ENCODE measurements at regions of chr3 and their contacts with region 1.

Region 1: DNA sequence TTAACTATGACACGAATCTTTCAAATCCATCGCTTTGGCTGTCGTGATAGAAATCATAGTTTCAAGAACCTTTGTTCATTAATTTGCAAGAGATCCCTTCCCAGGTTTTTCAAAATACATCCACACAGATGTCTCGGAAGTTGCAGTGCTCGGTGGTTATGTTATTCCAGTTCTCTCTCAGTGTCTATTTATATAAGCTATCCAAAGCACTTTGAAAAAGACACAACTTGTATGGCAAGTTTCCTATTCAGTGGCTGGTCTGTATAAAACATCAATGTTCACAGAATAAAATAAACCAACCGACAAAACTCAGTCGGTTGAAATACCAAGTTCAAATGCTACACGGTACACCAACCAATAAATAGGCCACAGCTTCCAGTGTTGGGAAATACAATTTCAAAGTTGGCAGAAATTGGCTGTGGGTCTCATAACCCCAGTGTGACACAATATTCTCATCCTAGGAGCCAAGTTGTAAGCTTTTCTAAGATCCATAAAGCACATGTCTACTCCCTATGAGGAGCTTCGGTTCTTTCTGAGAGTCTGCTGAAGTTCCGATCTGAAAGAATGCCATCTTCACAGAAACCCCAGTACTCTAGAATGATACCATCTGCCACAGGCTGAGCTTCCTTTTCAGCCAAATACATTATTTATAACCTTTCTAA is 23.7 kb downstream of the SATB1 start:
- DNase-seq: no peak
- H3K4me3 Mint-ChIP-seq: no peak overlapping the region
- H3K27ac Mint-ChIP-seq: peak overlapping the region; percentile 77
- H3K4me1 Mint-ChIP-seq: peaks cover 68% of the 10 kb centered on the region
- H3K27me3 Mint-ChIP-seq: no peaks in the 10 kb centered on the region

Region 2: GRCh38 chr3:18334837-18335601 is 66.4 kb before region 1 on chr3:
- CTCF ChIA-PET with region 1: no interaction called
- POLR2A ChIA-PET with region 1: no interaction called
- DNase-seq: no peak
- H3K4me3 Mint-ChIP-seq: no peak overlapping the region
- H3K27ac Mint-ChIP-seq: no peak overlapping the region
- H3K4me1 Mint-ChIP-seq: peaks cover 9% of the 10 kb centered on the region
- H3K27me3 Mint-ChIP-seq: peaks cover 5% of the 10 kb centered on the region

Region 3: GRCh38 chr3:18382760-18383369 is 18.6 kb before region 1 on chr3:
- CTCF ChIA-PET with region 1: interaction called, 4 read pairs
- POLR2A ChIA-PET with region 1: interaction called, 11 read pairs
- DNase-seq: no peak
- H3K4me3 Mint-ChIP-seq: no peak overlapping the region
- H3K27ac Mint-ChIP-seq: peak overlapping the region; percentile 38
- H3K4me1 Mint-ChIP-seq: peaks cover 42% of the 10 kb centered on the region
- H3K27me3 Mint-ChIP-seq: no peaks in the 10 kb centered on the region

Region 4: DNA sequence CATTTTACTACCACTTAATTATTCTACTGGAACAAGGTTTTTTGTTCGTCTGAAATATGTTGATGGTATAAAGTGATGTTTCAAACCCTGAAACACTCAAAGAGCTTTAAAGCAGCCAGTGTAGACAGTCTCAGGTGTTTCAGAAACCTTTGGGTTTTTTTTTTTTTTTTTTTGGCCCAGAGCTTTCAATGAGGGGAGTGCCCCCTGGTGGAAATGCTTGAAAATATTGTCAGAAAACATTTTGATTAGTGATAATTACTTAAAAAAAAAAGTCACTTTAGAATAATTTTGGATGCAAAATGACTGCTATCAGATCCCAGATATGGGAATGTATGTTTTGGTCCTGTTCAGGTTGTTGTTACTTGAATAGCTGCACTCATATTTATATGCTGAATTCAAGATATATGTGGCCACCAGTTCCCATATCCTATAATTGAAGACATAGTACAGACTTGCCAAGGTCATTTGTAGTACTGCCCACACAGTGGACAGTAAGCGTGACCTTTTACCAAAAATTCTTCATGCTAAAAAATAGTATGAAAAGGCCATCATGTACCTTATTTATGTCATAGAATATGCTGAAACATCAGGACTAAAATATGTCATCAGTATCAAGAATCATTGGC is 12.2 kb before region 1 on chr3:
- CTCF ChIA-PET with region 1: interaction called, 10 read pairs
- POLR2A ChIA-PET with region 1: interaction called, 11 read pairs
- DNase-seq: no peak
- H3K4me3 Mint-ChIP-seq: no peak overlapping the region
- H3K27ac Mint-ChIP-seq: no peak overlapping the region
- H3K4me1 Mint-ChIP-seq: peaks cover 46% of the 10 kb centered on the region
- H3K27me3 Mint-ChIP-seq: no peaks in the 10 kb centered on the region

Region 5: GRCh38 chr3:18419232-18419631 is 17.8 kb after region 1 on chr3:
- CTCF ChIA-PET with region 1: no interaction called
- POLR2A ChIA-PET with region 1: interaction called, 12 read pairs
- DNase-seq: no peak
- H3K4me3 Mint-ChIP-seq: peak overlapping the region; percentile 45
- H3K27ac Mint-ChIP-seq: peak overlapping the region; percentile 44
- H3K4me1 Mint-ChIP-seq: peaks cover 82% of the 10 kb centered on the region
- H3K27me3 Mint-ChIP-seq: no peaks in the 10 kb centered on the region

Region 6: DNA sequence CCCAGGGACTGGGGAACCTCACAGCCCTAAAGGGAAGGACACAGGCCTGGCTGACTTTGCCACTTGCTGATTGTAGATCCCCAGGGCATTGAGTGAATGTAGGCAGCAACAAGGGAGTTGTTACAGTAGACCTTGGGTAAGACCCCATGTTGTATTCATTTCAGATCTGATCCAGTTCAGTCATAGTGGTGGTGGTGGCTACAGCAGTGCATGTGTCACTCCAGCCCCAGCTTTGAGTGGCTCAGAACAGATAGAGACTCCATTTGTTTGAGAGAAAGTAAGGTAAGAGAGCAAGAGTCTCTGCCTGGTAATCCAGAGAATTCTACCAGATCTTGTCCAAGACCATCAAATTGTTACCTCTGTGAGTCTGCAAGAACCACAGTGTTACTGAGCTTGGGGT is 302.4 kb after region 1 on chr3:
- CTCF ChIA-PET with region 1: no interaction called
- POLR2A ChIA-PET with region 1: no interaction called
- DNase-seq: no peak
- H3K4me3 Mint-ChIP-seq: no peak overlapping the region
- H3K27ac Mint-ChIP-seq: no peak overlapping the region
- H3K4me1 Mint-ChIP-seq: no peaks in the 10 kb centered on the region
- H3K27me3 Mint-ChIP-seq: no peaks in the 10 kb centered on the region

Region 7: DNA sequence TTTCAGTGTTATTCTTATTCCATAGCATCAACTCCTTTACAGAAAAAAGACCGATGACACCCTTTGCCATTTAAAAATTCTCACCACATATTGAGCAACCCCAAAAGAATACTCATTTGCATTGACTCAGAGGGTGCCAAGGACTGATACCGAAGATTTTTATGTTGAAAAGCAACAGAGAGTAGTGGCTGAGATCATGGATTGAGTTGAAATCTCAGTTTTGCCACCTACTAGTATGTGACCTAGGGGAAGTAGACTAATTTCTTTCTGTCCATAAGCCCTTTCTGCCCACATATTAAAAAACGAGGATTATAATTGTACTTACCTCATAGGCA is 337.6 kb after region 1 on chr3:
- CTCF ChIA-PET with region 1: no interaction called
- POLR2A ChIA-PET with region 1: no interaction called
- DNase-seq: no peak
- H3K4me3 Mint-ChIP-seq: peak overlapping the region; percentile 18
- H3K27ac Mint-ChIP-seq: peak overlapping the region; percentile 92
- H3K4me1 Mint-ChIP-seq: peaks cover 73% of the 10 kb centered on the region
- H3K27me3 Mint-ChIP-seq: no peaks in the 10 kb centered on the region